Gastrocnemius medialis (tissue), 4 donors: ENCODE measurements at regions of chr11 and their contacts with region 1.

Region 1: GRCh38 chr11:124891373-124891861 is 6.2 kb downstream of the ROBO4 start:
- DNase-seq: no peak
- ATAC-seq: peak in 1 of 2 donors; percentile 20
- H3K4me3 ChIP-seq: no peak overlapping the region
- H3K27ac ChIP-seq: peak overlapping the region in 3 of 4 donors; percentile 28 to 50 (median 32)
- H3K4me1 ChIP-seq: peaks cover 27 to 35% of the 10 kb centered on the region in 2 donors
- H3K27me3 ChIP-seq: no peaks in the 10 kb centered on the region
- CTCF ChIP-seq: no peak
- POLR2A ChIP-seq: no peak

Region 2: GRCh38 chr11:124739479-124740276 is 151.7 kb before region 1 on chr11 and contains the start of gene NRGN:
- in situ Hi-C with region 1: no loop called
- intact Hi-C with region 1: loop called (anchors 5 kb)
- DNase-seq: peak; percentile 71 to 78
- ATAC-seq: peak; percentile 88 to 93
- H3K4me3 ChIP-seq: peak within 1 kb of the TSS; percentile 68 to 93 (median 70)
- H3K27ac ChIP-seq: peak within 1 kb of the TSS in 2 of 4 donors; percentile 12 to 33
- H3K4me1 ChIP-seq: peaks cover 3 to 14% of the 10 kb centered on the region in 2 donors
- H3K27me3 ChIP-seq: peaks cover 10 to 46% (median 37%) of the 10 kb centered on the region in 3 donors
- CTCF ChIP-seq: peak in 1 of 5 experiments; percentile 25
- POLR2A ChIP-seq: no peak
- total RNA-seq, gene NRGN: 0.51 to 0.52 TPM in 2 of 4 donors, not detected in the others

Region 3: DNA sequence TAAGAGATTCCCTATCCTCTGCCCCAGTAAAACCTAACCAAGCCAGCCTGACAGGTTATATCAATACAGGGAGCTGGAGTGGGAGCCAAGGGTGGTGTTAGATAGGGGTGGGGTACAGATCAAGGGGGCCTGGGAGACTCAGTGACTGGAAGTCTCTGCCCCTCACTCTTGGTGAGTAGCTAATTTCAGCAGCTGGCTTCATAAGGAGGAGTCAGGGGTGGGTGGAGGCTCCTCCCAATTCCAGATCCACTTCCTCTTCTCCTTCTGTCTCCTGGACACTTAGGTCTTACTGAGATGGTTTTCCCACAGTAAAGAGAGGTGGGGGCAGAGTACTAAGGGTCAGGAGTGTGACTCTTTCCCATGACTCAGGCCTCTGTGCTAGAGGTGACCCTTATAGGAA is 138.2 kb before region 1 on chr11:
- in situ Hi-C with region 1: no loop called
- intact Hi-C with region 1: no loop called
- DNase-seq: no peak
- ATAC-seq: no peak
- H3K4me3 ChIP-seq: no peak overlapping the region
- H3K27ac ChIP-seq: no peak overlapping the region
- H3K4me1 ChIP-seq: peaks cover 3 to 6% of the 10 kb centered on the region in 2 donors
- H3K27me3 ChIP-seq: peaks cover 34 to 50% (median 48%) of the 10 kb centered on the region in 3 donors
- CTCF ChIP-seq: no peak
- POLR2A ChIP-seq: no peak